ENCODE measurements at regions of chr14 and their contacts with region 1.

Region 1: DNA sequence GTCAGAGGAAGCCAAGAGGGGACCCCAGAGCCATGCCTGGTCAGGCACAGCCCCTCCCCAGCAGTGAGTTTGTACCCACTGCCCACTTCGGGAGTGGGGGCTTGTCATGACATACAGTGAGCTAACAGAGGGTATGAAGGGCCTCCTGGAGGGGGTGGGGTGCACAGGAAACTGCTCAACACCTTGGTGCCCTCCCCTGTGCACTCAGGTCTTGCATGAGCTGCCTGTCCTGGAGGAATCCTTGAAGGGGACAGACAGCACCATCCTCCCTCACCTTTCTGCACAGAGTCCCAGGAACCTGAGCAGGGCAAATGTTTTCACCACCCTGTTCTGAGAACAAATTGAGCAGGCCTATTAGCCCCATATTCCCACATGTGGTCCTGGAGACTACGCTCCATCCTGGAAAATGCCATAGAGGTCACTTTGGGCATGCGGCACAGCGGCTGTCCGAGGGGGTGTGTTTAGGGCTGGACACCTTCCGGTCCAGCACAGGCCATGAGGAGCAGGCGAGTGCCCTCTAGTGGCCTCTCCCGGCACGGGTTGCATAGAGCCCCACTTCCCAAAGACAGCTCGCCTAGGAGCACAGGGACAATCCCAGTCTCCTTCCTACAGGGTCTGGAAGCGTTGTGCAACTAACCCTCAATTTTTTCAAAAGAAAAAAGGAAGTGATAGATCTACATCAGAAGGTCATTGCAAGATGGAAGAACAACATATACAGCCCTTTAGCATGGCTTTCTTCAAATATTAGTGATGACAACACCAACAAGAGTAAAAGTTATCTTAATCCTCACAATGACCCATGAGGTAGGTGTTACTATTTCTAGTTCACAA is 31.9 kb upstream of the ZFP36L1 start:
- DNase-seq: peak; percentile 81 to 92 (median 89)
- ATAC-seq: peak; percentile 93 to 96 (median 95)
- H3K4me3 ChIP-seq: peak overlapping the region in 2 of 12 donors; percentile 22 to 23
- H3K27ac ChIP-seq: no peak overlapping the region
- H3K4me1 ChIP-seq: peaks cover 0 to 14% (median 3%) of the 10 kb centered on the region in 12 donors
- H3K27me3 ChIP-seq: no peaks in the 10 kb centered on the region
- CTCF ChIP-seq: peak; percentile 79 to 97 (median 90)
- POLR2A ChIP-seq: no peak

Region 2: DNA sequence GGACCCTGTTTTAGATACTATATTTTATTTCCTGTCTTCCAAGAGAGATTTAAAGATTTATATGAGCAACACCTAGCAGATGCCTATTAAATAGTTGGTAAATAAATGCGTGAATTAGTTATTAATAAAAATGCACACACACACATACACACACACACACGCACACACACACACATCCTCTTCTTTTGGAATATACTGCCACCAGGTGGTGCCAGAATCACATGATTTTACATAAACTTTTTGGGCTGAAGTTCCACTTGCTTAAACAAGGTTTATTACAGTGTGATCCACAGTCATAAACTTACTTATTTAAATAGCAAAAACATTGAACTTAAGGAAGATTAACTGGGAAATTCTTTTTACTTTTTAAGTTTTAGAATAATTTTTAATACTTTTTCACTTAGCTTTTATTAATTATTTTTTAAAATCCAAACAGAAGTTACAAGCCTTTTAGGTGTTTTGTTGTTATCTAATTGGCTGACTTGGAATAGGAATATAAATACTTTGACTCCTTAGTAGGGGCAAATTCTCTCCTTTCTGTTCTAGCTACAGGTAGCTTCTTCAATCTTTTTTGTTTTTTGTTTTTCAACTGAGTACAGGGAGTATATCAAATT is 987.6 kb before region 1 on chr14:
- intact Hi-C with region 1: loop called in 5 of 10 experiments (anchors 5 to 10 kb)
- DNase-seq: peak in 3 of 5 donors; percentile 52 to 64 (median 60)
- ATAC-seq: peak in 1 of 4 donors; percentile 41
- H3K4me3 ChIP-seq: no peak overlapping the region
- H3K27ac ChIP-seq: no peak overlapping the region
- H3K4me1 ChIP-seq: no peaks in the 10 kb centered on the region
- H3K27me3 ChIP-seq: no peaks in the 10 kb centered on the region
- CTCF ChIP-seq: peak; percentile 33 to 63 (median 44)
- POLR2A ChIP-seq: no peak

Region 3: DNA sequence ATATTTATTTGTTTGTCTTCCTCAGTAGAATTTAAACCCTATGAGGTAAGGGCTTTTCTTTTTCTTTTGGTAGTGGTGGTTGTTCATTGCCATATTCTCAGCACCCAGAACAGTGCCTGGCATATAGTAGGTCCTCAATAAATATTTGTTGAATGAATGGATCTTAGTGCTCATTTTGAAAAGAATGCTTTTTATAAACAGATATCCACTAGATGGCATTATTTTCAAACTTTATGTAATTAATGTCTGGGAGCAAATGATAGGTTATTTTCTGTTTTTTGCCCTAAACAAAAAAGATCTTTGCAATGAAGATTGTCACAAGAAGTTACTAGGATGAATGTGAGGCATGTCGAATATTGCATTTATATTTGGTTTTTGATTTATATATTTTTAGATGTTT is 941.0 kb before region 1 on chr14:
- intact Hi-C with region 1: loop called in 3 of 10 experiments (anchors 5 kb)
- DNase-seq: no peak
- ATAC-seq: no peak
- H3K4me3 ChIP-seq: no peak overlapping the region
- H3K27ac ChIP-seq: peak overlapping the region in 1 of 12 donors; percentile 22
- H3K4me1 ChIP-seq: peaks cover 0 to 26% (median 0%) of the 10 kb centered on the region in 12 donors
- H3K27me3 ChIP-seq: no peaks in the 10 kb centered on the region
- CTCF ChIP-seq: peak in 9 of 12 donors; percentile 17 to 55 (median 33)
- POLR2A ChIP-seq: no peak

Measured in heart left ventricle (tissue), 16 donors.